B cell (primary cell): ENCODE measurements at regions of chr11 and their contacts with region 1.

Region 1: DNA sequence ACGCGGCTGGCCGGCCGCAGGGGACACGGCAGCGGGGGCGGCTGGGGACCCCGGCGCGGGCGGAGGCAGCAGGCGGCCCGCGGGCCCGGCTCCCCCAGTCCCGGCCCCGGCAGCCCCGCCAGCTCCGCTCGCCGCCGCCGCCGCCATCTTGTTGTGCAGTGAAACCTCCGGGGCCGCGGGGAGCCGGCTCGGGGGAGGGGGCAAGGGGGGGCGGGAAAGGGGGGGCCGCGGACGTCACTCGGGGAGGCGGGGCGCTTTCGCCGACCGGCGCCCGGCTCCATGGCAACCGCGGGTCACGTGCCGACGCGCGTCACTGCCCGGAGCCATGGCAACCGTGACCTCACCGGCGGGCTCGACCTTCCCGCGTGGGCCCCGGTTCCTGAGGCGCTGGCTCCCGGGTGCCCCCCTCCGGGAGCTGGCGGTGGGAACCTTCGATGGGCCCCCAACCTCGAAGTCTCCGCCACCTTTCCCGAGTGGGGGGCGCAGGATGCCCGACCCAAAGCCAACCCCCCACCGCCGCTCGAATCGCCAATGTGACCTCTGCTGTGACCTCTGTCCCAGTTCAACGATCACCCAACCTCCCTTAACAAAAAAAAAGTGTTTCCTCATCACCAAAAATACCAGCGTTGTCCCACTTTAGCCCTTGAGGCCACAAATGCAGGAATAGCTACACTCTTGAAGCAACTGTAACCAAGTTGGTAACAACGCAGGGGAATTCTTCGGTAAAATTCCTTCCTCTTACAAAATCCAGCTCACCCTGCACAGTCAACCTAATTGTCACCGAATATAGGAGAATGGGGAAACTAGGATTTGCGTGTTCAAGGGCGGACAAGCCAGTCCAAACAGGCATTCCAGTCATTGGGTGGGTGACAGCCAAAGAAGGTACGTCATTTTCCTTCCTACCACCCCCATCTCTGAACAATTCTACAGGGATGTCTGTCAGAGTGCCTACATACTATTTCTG is at the start of gene SIK3:
- DNase-seq: peak; percentile 97
- ATAC-seq: peak; percentile 80
- H3K4me3 ChIP-seq: peak within 1 kb of the TSS; percentile 67 to 93 (median 78)
- H3K4me3 Mint-ChIP-seq: peak within 1 kb of the TSS; percentile 99
- H3K27ac ChIP-seq: peak within 1 kb of the TSS; percentile 92 to 100
- H3K27ac Mint-ChIP-seq: peak within 1 kb of the TSS; percentile 95
- H3K4me1 ChIP-seq: peaks cover 44 to 51% of the 10 kb centered on the region in 2 donors
- H3K4me1 Mint-ChIP-seq: peaks cover 56% of the 10 kb centered on the region
- H3K27me3 ChIP-seq: no peaks in the 10 kb centered on the region
- H3K27me3 Mint-ChIP-seq: no peaks in the 10 kb centered on the region
- CTCF ChIP-seq: peak; percentile 47
- total RNA-seq, gene SIK3: 180 and 196 TPM in 2 replicates

Region 2: GRCh38 chr11:116879800-116880625 is 218.5 kb before region 1 on chr11:
- CTCF ChIA-PET with region 1: interaction called, 123 read pairs
- POLR2A ChIA-PET with region 1: interaction called, 3 read pairs
- intact Hi-C with region 1: loop called (anchors 2 kb)
- DNase-seq: peak; percentile 71
- ATAC-seq: peak; percentile 49
- H3K4me3 ChIP-seq: no peak overlapping the region
- H3K4me3 Mint-ChIP-seq: no peak overlapping the region
- H3K27ac ChIP-seq: no peak overlapping the region
- H3K27ac Mint-ChIP-seq: no peak overlapping the region
- H3K4me1 ChIP-seq: no peaks in the 10 kb centered on the region
- H3K4me1 Mint-ChIP-seq: peaks cover 10% of the 10 kb centered on the region
- H3K27me3 ChIP-seq: no peaks in the 10 kb centered on the region
- H3K27me3 Mint-ChIP-seq: no peaks in the 10 kb centered on the region
- CTCF ChIP-seq: peak; percentile 75

Region 3: DNA sequence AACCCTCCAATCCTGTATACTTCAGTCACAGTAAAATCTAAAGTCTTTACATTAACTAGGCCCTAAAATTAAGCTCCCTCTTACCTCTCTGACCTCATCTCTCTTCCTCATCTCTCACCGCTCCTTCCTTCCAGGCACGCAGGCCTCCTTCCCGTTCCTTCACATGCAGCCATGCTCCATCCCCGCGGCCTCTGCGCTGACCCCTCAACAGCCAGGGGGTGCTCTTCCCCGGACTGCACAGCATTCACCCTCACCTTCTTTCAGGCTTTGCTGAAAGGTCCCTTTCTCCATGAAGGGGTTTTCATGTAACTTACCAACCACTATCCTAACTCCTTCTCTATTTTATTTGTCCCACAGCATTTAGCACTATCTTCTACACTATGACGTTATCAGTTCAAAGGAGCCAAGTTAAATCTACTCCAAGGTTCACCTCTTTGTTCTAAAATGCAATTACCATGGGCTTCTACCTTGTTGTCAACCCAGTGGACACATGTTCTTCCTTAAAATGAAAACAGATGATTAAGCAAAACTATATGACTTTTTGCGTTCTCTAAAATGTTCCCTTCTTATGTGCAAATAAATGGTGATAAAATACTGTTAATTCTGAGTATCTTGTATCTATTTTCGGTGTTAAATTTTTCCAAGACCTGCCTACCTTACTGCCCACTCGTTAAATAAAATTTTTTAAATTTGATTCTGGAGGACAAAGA is 203.3 kb before region 1 on chr11:
- CTCF ChIA-PET with region 1: interaction called, 39 read pairs
- POLR2A ChIA-PET with region 1: no interaction called
- intact Hi-C with region 1: loop called (anchors 1 kb)
- DNase-seq: peak; percentile 64
- ATAC-seq: peak; percentile 63
- H3K4me3 ChIP-seq: no peak overlapping the region
- H3K4me3 Mint-ChIP-seq: no peak overlapping the region
- H3K27ac ChIP-seq: peak overlapping the region in 1 of 2 donors; percentile 51
- H3K27ac Mint-ChIP-seq: peak overlapping the region; percentile 34
- H3K4me1 ChIP-seq: peaks cover 0 to 5% of the 10 kb centered on the region in 2 donors
- H3K4me1 Mint-ChIP-seq: peaks cover 13% of the 10 kb centered on the region
- H3K27me3 ChIP-seq: no peaks in the 10 kb centered on the region
- H3K27me3 Mint-ChIP-seq: no peaks in the 10 kb centered on the region
- CTCF ChIP-seq: peak; percentile 20

Region 4: GRCh38 chr11:116980136-116980793 is 118.3 kb before region 1 on chr11:
- CTCF ChIA-PET with region 1: interaction called, 4 read pairs
- POLR2A ChIA-PET with region 1: no interaction called
- intact Hi-C with region 1: loop called (anchors 1 kb)
- DNase-seq: peak; percentile 88
- ATAC-seq: peak; percentile 97
- H3K4me3 ChIP-seq: peak overlapping the region; percentile 11 to 65 (median 49)
- H3K4me3 Mint-ChIP-seq: peak overlapping the region; percentile 85
- H3K27ac ChIP-seq: peak overlapping the region; percentile 91 to 94
- H3K27ac Mint-ChIP-seq: peak overlapping the region; percentile 95
- H3K4me1 ChIP-seq: peaks cover 62 to 66% of the 10 kb centered on the region in 2 donors
- H3K4me1 Mint-ChIP-seq: peaks cover 63% of the 10 kb centered on the region
- H3K27me3 ChIP-seq: no peaks in the 10 kb centered on the region
- H3K27me3 Mint-ChIP-seq: no peaks in the 10 kb centered on the region
- CTCF ChIP-seq: no peak

Region 5: GRCh38 chr11:117058761-117059261 is 39.7 kb before region 1 on chr11:
- CTCF ChIA-PET with region 1: interaction called, 4 read pairs
- POLR2A ChIA-PET with region 1: no interaction called
- intact Hi-C with region 1: loop called (anchors 1 kb)
- DNase-seq: no peak
- ATAC-seq: no peak
- H3K4me3 ChIP-seq: no peak overlapping the region
- H3K4me3 Mint-ChIP-seq: peak overlapping the region; percentile 10
- H3K27ac ChIP-seq: no peak overlapping the region
- H3K27ac Mint-ChIP-seq: no peak overlapping the region
- H3K4me1 ChIP-seq: peaks cover 42 to 55% of the 10 kb centered on the region in 2 donors
- H3K4me1 Mint-ChIP-seq: peaks cover 77% of the 10 kb centered on the region
- H3K27me3 ChIP-seq: no peaks in the 10 kb centered on the region
- H3K27me3 Mint-ChIP-seq: no peaks in the 10 kb centered on the region
- CTCF ChIP-seq: no peak

Region 6: DNA sequence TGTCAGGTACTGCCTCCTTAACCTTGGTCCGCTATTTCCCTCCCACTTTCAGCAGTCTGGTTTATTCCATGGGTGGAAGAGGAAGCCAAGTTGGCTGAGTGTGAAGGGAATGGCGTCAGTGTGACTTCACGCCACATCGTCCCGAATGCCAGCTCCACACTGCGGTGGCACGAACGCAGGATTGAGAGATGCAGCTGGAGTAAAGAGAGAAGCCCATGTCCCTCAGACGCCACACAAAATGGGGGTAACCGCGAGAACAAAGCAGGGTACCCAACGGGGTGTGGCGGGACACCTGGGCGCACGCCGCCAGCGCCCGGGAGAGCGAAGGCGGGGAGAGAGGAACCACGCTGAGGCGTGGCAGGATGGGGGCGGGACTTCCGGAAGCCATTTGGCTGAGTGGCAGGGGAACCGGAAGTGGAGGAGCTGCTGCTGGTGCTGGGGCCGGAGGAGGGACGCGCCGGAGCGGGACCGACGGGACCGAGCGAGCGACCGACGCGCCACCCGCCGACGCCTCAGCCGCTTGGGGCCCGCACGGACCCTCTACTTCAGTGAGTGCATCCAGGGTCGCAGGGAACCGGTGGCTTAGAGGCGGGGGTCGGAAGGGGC is 45.4 kb after region 1 on chr11 and contains the start of gene PAFAH1B2:
- CTCF ChIA-PET with region 1: no interaction called
- POLR2A ChIA-PET with region 1: interaction called, 11 read pairs
- intact Hi-C with region 1: loop called (anchors 5 kb)
- DNase-seq: peak; percentile 98
- ATAC-seq: peak; percentile 85
- H3K4me3 ChIP-seq: peak within 1 kb of the TSS; percentile 78 to 88 (median 82)
- H3K4me3 Mint-ChIP-seq: peak within 1 kb of the TSS; percentile 95
- H3K27ac ChIP-seq: peak within 1 kb of the TSS; percentile 80 to 87
- H3K27ac Mint-ChIP-seq: peak within 1 kb of the TSS; percentile 98
- H3K4me1 ChIP-seq: peaks cover 20 to 25% of the 10 kb centered on the region in 2 donors
- H3K4me1 Mint-ChIP-seq: peaks cover 36% of the 10 kb centered on the region
- H3K27me3 ChIP-seq: no peaks in the 10 kb centered on the region
- H3K27me3 Mint-ChIP-seq: peaks cover 8% of the 10 kb centered on the region
- CTCF ChIP-seq: no peak
- total RNA-seq, gene PAFAH1B2: 98.1 and 103 TPM in 2 replicates